Transverse colon (tissue), 4 donors: ENCODE measurements at regions of chr16 and their contacts with region 1.

Region 1: GRCh38 chr16:5502467-5502869 is 404.9 kb upstream of the EEF2KMT start:
- DNase-seq: peak; percentile 10
- H3K4me3 ChIP-seq: no peak overlapping the region
- H3K27ac ChIP-seq: no peak overlapping the region
- H3K4me1 ChIP-seq: no peaks in the 10 kb centered on the region
- H3K27me3 ChIP-seq: no peaks in the 10 kb centered on the region
- CTCF ChIP-seq: peak in 4 of 5 experiments; percentile 28 to 50 (median 40)
- EP300 ChIP-seq: no peak
- POLR2A ChIP-seq: no peak

Region 2: GRCh38 chr16:5551909-5552308 is 49.4 kb after region 1 on chr16:
- in situ Hi-C with region 1: no loop called
- intact Hi-C with region 1: no loop called
- DNase-seq: no peak
- H3K4me3 ChIP-seq: no peak overlapping the region
- H3K27ac ChIP-seq: no peak overlapping the region
- H3K4me1 ChIP-seq: no peaks in the 10 kb centered on the region
- H3K27me3 ChIP-seq: no peaks in the 10 kb centered on the region
- CTCF ChIP-seq: no peak
- EP300 ChIP-seq: no peak
- POLR2A ChIP-seq: no peak

Region 3: DNA sequence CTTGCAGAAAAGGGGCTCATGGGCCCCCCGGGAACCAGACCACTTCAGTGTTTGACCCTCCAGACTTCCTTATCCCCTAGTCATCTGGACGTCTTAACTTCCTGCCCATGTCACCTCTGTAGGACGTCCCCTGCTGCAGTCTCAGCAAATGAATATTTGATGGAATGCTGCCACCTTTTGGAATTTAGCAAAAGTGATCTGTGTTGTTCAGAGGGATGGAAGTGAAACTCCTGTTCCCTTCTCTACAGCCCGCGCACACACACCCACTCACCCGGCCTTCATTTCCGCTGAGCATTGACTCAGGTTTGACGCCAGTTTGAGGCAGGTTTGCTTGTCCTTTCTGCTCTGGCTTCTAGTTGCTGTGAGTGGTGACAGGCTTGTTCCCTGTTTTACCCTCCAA is 102.3 kb after region 1 on chr16:
- in situ Hi-C with region 1: loop called in 1 of 4 experiments (anchors 10 kb)
- intact Hi-C with region 1: no loop called
- DNase-seq: no peak
- H3K4me3 ChIP-seq: no peak overlapping the region
- H3K27ac ChIP-seq: no peak overlapping the region
- H3K4me1 ChIP-seq: no peaks in the 10 kb centered on the region
- H3K27me3 ChIP-seq: no peaks in the 10 kb centered on the region
- CTCF ChIP-seq: peak in 3 of 5 experiments; percentile 24 to 42 (median 25)
- EP300 ChIP-seq: no peak
- POLR2A ChIP-seq: no peak

Region 4: DNA sequence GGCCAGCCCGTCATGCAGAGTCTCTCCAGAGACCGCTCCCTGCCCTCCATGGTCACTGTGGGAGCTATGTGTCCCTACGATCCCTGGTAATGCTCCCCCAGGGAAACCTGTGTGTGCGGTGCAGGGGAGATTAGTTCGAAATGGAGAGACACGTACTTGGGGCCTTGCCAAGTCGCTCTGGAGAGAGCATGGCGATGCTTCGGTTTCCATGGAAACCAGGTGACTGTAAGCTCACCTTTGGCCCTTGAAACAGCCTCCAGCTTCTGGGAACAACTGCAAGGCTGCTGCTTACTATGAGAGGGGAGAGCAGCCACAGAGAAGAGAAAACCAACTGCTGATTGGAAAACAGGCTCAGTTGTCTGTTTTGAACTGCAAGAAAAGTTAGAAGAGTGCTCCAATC is 474.9 kb after region 1 on chr16:
- in situ Hi-C with region 1: no loop called
- intact Hi-C with region 1: loop called (anchors 5 kb)
- DNase-seq: no peak
- H3K4me3 ChIP-seq: no peak overlapping the region
- H3K27ac ChIP-seq: no peak overlapping the region
- H3K4me1 ChIP-seq: peaks cover 0 to 4% (median 0%) of the 10 kb centered on the region in 4 donors
- H3K27me3 ChIP-seq: peaks cover 4% of the 10 kb centered on the region
- CTCF ChIP-seq: no peak
- EP300 ChIP-seq: no peak
- POLR2A ChIP-seq: no peak